MCF 10A (cell line): ENCODE measurements at regions of chr17 and their contacts with region 1.

Region 1: DNA sequence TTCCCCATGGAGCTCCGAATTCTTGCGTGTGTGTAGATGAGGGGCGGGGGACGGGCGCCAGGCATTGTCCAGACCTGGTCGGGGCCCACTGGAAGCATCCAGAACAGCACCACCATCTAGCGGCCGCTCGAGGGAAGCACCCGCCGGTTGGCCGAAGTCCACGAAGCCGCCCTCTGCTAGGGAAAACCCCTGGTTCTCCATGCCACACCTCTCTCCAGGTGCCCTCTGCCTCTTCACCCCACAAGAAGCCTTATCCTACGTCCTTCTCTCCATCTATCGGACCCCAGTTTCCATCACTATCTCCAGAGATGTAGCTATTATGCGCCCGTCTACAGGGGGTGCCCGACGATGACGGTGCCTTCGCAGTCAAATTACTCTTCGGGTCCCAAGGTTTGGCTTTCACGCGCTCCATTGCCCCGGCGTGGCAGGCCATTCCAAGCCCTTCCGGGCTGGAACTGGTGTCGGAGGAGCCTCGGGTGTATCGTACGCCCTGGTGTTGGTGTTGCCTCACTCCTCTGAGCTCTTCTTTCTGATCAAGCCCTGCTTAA is 617 bp upstream of the SENP3 start:
- DNase-seq: peak; percentile 92
- H3K4me3 Mint-ChIP-seq: peak overlapping the region; percentile 81
- H3K27ac Mint-ChIP-seq: peak overlapping the region; percentile 91
- H3K4me1 Mint-ChIP-seq: peaks cover 42% of the 10 kb centered on the region
- H3K27me3 Mint-ChIP-seq: no peaks in the 10 kb centered on the region
- CTCF ChIP-seq: peak; percentile 88

Region 2: GRCh38 chr17:7351665-7352501 is 209.2 kb before region 1 on chr17 and contains the start of gene KCTD11:
- CTCF ChIA-PET with region 1: interaction called, 26 read pairs
- POLR2A ChIA-PET with region 1: interaction called, 10 read pairs
- intact Hi-C with region 1: loop called (anchors 1 kb)
- DNase-seq: peak; percentile 89
- H3K4me3 Mint-ChIP-seq: peak within 1 kb of the TSS; percentile 85
- H3K27ac Mint-ChIP-seq: peak within 1 kb of the TSS; percentile 93
- H3K4me1 Mint-ChIP-seq: peaks cover 17% of the 10 kb centered on the region
- H3K27me3 Mint-ChIP-seq: no peaks in the 10 kb centered on the region
- CTCF ChIP-seq: no peak
- total RNA-seq, gene KCTD11: 9.2 and 10.1 TPM in 2 replicates

Region 3: DNA sequence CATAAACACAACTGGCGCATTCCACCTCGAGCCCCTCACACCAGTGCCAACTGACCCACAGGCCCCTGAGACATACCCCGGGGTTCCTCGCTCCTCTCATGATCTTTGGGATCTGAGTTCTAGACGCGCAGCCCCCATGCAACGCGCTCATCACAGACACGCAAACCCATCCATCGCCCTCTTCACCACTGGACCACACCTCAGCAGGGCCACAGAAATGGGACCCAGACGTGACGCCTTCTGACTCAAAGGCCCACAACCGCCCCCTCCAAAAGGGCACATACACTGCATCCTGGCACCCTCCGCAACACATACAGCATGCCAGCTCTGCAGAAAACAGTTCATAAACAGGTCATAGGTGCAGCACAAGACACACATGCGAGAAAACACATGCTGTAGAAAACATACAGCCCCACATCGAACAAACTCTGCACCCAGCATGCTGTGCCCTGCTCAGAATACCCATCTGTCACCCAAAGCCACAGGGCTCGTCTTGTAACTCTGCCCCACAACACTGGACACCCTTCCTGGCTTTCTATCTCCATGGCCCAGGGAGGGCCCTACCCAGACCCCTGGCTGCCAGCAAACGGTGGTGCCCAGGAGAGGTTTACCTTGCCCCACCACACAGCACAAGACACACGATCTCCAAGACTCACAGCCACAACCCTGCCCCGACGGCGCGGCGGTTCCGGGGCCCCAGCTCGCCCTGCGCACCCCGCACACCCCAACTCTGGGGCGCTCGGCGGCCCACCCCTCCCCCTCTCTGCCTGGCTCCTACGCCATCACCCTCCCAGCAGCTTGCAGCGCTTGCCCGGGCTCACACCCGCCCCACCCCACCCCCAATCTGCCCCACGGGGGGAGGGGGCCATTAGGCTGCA is 82.6 kb before region 1 on chr17:
- CTCF ChIA-PET with region 1: interaction called, 15 read pairs
- POLR2A ChIA-PET with region 1: interaction called, 71 read pairs
- intact Hi-C with region 1: no loop called
- DNase-seq: no peak
- H3K4me3 Mint-ChIP-seq: peak overlapping the region; percentile 84
- H3K27ac Mint-ChIP-seq: peak overlapping the region; percentile 20
- H3K4me1 Mint-ChIP-seq: peaks cover 43% of the 10 kb centered on the region
- H3K27me3 Mint-ChIP-seq: no peaks in the 10 kb centered on the region
- CTCF ChIP-seq: no peak

Region 4: DNA sequence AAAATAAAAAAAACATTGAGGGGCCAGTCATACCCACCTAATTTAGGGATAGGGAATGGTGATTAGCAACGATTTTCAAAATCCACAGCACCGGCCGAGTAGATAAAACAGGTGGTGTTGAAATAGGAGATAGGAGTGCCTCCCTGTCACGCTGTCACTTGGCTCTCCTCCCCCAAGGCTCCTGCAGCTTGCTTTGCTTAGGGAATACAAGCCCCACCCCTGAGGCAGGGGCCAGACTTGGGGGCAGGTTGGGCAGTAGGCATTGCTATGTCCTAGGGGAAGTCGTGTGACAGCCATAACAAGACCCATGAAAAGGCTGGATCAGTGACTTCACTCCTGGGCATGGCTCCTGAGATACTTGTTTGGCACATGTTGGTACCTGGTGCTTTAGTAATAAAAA is 51.2 kb before region 1 on chr17:
- CTCF ChIA-PET with region 1: interaction called, 123 read pairs
- POLR2A ChIA-PET with region 1: interaction called, 65 read pairs
- intact Hi-C with region 1: loop called (anchors 1 kb)
- DNase-seq: no peak
- H3K4me3 Mint-ChIP-seq: no peak overlapping the region
- H3K27ac Mint-ChIP-seq: no peak overlapping the region
- H3K4me1 Mint-ChIP-seq: no peaks in the 10 kb centered on the region
- H3K27me3 Mint-ChIP-seq: no peaks in the 10 kb centered on the region
- CTCF ChIP-seq: no peak

Region 5: DNA sequence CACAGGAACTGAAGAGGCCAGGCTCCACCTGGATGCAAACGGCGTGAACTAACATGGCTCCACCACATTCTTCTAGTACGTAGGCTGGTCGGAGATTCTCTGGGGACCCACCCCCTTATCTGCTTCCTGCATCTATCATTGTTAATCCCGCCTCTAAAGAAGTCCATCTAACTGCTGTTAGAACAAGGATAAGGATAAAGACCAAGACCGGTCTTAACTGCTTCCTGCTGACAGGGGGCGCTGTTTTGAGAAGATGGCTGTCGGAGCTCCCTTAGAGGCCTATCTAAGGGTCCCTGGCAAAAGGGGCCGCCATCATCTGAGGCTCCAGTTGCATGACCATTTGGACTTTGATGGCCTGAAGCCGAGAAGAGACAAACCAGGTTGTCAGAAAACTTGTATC is 38.1 kb before region 1 on chr17:
- CTCF ChIA-PET with region 1: interaction called, 19 read pairs
- POLR2A ChIA-PET with region 1: interaction called, 65 read pairs
- intact Hi-C with region 1: no loop called
- DNase-seq: no peak
- H3K4me3 Mint-ChIP-seq: no peak overlapping the region
- H3K27ac Mint-ChIP-seq: no peak overlapping the region
- H3K4me1 Mint-ChIP-seq: no peaks in the 10 kb centered on the region
- H3K27me3 Mint-ChIP-seq: no peaks in the 10 kb centered on the region
- CTCF ChIP-seq: no peak

Region 6: GRCh38 chr17:7572588-7573323 is 11.7 kb after region 1 on chr17:
- CTCF ChIA-PET with region 1: interaction called, 13 read pairs
- POLR2A ChIA-PET with region 1: interaction called, 38 read pairs
- intact Hi-C with region 1: no loop called
- DNase-seq: peak; percentile 99
- H3K4me3 Mint-ChIP-seq: peak overlapping the region; percentile 90
- H3K27ac Mint-ChIP-seq: peak overlapping the region; percentile 99
- H3K4me1 Mint-ChIP-seq: peaks cover 11% of the 10 kb centered on the region
- H3K27me3 Mint-ChIP-seq: no peaks in the 10 kb centered on the region
- CTCF ChIP-seq: no peak

Region 7: GRCh38 chr17:7589204-7589868 is 28.2 kb after region 1 on chr17:
- CTCF ChIA-PET with region 1: interaction called, 21 read pairs
- POLR2A ChIA-PET with region 1: interaction called, 38 read pairs
- intact Hi-C with region 1: loop called (anchors 1 kb)
- DNase-seq: peak; percentile 92
- H3K4me3 Mint-ChIP-seq: peak overlapping the region; percentile 76
- H3K27ac Mint-ChIP-seq: peak overlapping the region; percentile 78
- H3K4me1 Mint-ChIP-seq: peaks cover 42% of the 10 kb centered on the region
- H3K27me3 Mint-ChIP-seq: no peaks in the 10 kb centered on the region
- CTCF ChIP-seq: peak; percentile 88